Adrenal gland (tissue), 19 donors: ENCODE measurements at regions of chr5 and their contacts with region 1.

Region 1: GRCh38 chr5:59174248-59174844 is 591.5 kb downstream of the RAB3C start:
- DNase-seq: peak in 5 of 7 donors; percentile 18 to 57 (median 24)
- H3K4me3 ChIP-seq: no peak overlapping the region
- H3K27ac ChIP-seq: no peak overlapping the region
- H3K4me1 ChIP-seq: no peaks in the 10 kb centered on the region
- H3K27me3 ChIP-seq: no peaks in the 10 kb centered on the region
- CTCF ChIP-seq: peak; percentile 38 to 76 (median 64)
- POLR2A ChIP-seq: no peak

Region 2: DNA sequence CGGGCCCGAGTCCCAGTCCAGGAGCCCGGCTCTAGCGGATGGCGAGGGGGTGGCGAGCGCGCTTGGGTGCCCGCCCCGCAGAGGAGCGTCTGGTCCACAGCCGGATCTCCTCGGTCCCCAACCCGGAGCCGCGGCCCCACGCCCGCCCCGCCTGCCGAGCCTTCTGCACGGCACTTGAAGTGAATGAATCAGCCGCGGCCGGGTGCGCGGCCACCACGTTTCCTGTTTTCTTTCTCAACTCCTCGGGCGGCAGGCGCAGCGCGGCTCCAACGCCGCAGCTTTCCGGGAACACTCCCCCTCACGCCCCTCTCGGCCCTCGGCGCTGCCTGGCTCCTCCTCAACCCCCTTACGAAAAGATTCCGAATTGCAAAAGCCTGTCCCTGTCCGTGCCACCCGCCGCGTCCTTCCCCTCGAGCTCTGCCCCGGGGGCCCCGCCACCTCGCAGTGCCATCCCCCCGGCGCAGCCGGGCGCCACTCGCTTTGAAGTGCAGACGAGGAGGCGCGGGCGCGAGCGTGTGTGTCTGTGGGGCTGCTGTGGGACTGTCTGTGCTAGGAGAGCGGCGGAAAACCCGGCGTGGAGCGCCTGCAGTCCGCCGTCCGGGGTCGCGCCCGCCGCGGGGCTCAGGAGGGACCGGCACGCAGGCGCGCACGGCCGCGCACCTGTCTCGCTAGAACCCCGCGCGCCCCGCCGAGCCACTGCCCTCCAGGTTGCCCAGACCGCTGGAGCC is 134.9 kb before region 1 on chr5:
- intact Hi-C with region 1: loop called (anchors 10 kb)
- DNase-seq: peak; percentile 50 to 74 (median 64)
- H3K4me3 ChIP-seq: peak overlapping the region; percentile 5 to 74 (median 28)
- H3K27ac ChIP-seq: peak overlapping the region in 2 of 5 donors; percentile 41 to 45
- H3K4me1 ChIP-seq: peaks cover 0 to 11% of the 10 kb centered on the region in 2 donors
- H3K27me3 ChIP-seq: no peaks in the 10 kb centered on the region
- CTCF ChIP-seq: no peak
- POLR2A ChIP-seq: no peak